Vagina (tissue), 2 donors: ENCODE measurements at regions of chr16 and their contacts with region 1.

Region 1: GRCh38 chr16:2023098-2023925 is 3.4 kb upstream of the NHERF2 start:
- DNase-seq: no peak
- H3K4me3 ChIP-seq: peak overlapping the region; percentile 24 to 42
- H3K27ac ChIP-seq: peak overlapping the region; percentile 73
- H3K4me1 ChIP-seq: peaks cover 63% of the 10 kb centered on the region
- H3K27me3 ChIP-seq: peaks cover 11% of the 10 kb centered on the region
- CTCF ChIP-seq: peak; percentile 92 to 98 (median 98)
- POLR2A ChIP-seq: no peak

Region 2: DNA sequence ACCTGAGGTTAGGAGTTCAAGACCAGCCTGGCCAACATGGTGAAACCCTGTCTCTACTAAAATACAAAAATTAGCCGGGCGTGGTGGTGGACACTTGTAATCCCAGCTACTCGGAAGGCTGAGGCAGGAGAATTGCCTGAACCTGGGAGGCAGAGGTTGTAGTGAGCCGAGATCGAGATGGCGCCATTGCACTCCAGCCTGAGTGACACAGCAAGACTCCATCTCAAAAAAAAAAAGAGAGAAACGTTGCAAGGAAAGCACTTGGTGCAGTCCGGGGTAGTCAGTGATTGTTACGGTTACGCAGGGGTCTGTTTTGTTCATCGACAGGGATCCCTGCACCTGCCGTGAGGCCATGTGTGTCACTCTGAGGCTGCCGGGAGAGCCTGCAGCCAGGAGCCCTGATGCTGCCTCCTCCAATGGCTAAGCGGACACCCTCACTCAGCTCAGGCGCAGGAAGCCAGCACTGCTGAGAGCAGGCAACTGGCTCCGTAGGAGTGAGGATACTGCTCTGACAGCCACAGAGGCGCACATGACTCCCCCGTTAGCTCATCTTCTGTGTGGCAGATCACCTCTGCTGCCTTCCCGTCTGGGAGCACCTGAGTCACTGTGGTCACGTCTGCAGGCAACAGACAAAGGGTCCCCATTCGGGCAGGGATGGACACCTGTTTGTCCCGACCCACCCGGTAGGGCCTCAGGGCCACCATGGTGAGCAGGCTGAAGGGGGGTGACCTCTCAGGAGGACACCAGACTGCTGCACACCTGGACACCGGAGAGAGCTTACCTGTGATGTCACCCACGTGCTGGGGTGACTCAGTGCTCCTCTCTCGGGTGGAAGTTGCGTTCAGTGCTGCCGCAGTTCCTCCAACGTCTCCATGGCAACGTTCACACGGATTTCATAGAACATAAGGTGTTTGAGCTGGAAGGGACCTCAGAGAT is 119.9 kb after region 1 on chr16:
- intact Hi-C with region 1: loop called (anchors 5 kb)
- DNase-seq: no peak
- H3K4me3 ChIP-seq: no peak overlapping the region
- H3K27ac ChIP-seq: no peak overlapping the region
- H3K4me1 ChIP-seq: peaks cover 15% of the 10 kb centered on the region
- H3K27me3 ChIP-seq: no peaks in the 10 kb centered on the region
- CTCF ChIP-seq: no peak
- POLR2A ChIP-seq: no peak